Activated CD4-positive, alpha-beta memory T cell treated with anti-CD3 and anti-CD28 coated beads, Interleukin-2, amount 10 ng/mL, durations not matched to agents 7 days and 5 days (primary cell): ENCODE measurements at regions of chr5 and their contacts with region 1.

Region 1: DNA sequence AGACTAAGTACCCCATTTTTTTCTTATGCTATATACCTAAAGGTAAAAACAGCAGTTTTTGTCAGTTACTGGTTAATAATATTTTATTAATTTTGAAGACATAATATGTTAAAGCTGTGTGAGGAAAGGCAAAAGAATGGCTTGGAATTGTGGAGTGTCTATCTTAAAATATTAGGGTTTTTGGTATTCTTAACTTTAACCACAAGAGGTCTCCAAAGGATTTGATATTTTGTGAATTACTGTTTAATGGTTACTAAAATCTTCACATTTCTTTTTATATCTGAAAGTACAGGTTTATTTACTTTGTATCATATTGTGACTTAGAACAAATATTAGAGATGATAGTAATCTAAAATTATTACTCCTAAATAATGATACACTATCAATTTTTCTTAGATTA is 32.0 kb upstream of the DHFR start:
- DNase-seq: no peak
- H3K4me3 Mint-ChIP-seq: no peak overlapping the region
- H3K27ac Mint-ChIP-seq: no peak overlapping the region
- H3K4me1 Mint-ChIP-seq: peaks cover 17% of the 10 kb centered on the region
- H3K27me3 Mint-ChIP-seq: no peaks in the 10 kb centered on the region

Region 2: GRCh38 chr5:81105261-81105877 is 418.6 kb after region 1 on chr5:
- CTCF ChIA-PET with region 1: interaction called, 16 read pairs
- POLR2A ChIA-PET with region 1: no interaction called
- DNase-seq: no peak
- H3K4me3 Mint-ChIP-seq: no peak overlapping the region
- H3K27ac Mint-ChIP-seq: no peak overlapping the region
- H3K4me1 Mint-ChIP-seq: peaks cover 15% of the 10 kb centered on the region
- H3K27me3 Mint-ChIP-seq: no peaks in the 10 kb centered on the region

Region 3: DNA sequence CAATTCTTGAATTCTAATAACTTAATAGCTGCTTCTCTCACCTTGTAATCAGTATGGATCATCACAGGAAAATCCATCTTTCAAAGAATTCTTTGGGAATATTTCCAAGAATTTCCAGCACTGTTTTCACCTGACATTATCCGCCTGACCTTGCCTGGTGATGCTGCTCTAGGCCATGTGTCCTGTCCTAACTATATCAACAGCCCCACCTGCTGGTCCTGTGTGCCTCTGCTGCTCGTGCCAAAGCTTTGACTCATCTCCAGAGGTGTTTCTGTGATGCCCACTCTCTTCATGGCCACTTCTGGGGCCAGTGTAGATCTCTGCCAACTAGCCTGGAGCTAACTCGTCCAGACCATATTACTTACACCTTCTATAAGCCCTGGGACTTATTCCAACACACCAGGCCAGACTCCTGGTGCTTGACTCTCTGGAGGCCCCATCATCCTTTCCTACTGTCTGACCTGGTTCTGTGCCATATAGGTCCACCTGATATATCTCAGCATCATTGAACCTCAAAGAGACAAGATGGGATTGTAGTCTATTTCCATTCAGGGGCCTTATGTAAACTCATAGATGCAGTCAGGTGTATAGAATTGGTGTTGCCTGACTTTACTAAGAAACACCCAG is 478.8 kb after region 1 on chr5:
- CTCF ChIA-PET with region 1: interaction called, 17 read pairs
- POLR2A ChIA-PET with region 1: interaction called, 3 read pairs
- DNase-seq: peak; percentile 69
- H3K4me3 Mint-ChIP-seq: no peak overlapping the region
- H3K27ac Mint-ChIP-seq: no peak overlapping the region
- H3K4me1 Mint-ChIP-seq: peaks cover 11% of the 10 kb centered on the region
- H3K27me3 Mint-ChIP-seq: no peaks in the 10 kb centered on the region